ENCODE measurements at regions of chr2 and their contacts with region 1.

Region 1: DNA sequence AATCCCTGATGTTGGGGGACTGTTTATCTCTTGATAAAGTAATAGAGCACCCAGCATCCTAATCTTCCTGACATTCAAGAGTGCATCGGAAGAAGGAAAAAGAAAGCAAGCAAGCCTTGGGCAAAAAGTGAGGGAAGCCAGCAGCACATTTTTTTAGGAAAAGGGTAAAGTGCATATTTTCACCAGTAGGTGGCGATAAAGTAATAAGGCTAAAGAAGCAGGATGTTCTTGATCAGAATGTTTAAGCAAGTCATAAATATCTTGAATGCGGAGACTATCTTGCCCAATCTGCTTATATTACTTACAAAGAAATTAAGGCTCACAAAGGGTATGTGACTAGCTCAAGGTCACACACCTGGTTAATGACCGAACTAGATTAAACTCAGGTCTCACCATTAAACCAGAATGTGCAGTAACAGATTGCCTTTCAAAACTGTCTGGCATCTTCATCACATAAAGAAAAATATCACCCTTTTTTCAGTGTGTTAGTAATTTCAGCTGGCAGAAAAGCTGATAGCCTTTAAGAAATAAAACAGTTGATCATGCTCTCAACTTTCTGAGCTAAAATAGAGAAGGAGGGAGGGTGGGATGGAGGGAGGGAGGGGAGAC is 83.8 kb downstream of the VIT start:
- DNase-seq: no peak

Region 2: DNA sequence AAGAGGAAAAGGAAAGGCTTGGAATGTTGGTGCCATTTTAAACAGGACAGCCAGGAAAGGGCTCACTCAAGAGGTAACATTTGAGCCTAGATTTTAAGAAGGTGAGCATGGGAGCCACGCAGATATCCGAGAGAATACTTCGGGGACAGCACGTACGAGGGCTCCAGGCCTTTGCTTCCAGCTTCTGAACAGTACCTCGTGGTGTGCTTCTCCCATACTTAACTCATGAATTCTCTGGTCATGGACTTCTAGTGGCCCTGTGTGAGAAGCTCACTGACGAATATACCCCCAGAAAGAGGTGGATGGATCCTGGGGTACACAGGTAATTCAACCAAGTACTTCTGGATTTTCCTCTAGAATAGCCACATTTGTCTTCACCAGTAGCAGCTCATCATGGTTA is 86.5 kb before region 1 on chr2:
- intact Hi-C with region 1: no loop called
- DNase-seq: no peak

Region 3: DNA sequence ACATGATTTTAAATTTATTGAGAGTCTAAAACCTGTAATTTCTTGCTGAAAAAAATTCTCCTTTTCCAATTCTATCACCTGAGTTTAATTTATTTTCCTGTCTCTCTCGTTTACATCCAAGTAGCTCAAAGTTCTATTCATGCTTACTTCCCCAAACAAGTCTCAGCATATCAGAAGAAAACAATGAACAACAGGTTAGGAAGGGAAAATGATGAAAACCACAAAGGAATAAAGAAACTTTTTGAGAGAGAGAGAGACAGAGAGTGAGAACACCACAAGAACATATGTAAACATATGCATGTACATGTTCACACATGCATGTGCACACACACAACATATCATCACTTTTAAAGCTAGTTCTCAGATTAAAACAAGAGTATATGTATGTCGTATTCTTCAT is 73.9 kb after region 1 on chr2:
- intact Hi-C with region 1: no loop called
- DNase-seq: no peak

Region 4: DNA sequence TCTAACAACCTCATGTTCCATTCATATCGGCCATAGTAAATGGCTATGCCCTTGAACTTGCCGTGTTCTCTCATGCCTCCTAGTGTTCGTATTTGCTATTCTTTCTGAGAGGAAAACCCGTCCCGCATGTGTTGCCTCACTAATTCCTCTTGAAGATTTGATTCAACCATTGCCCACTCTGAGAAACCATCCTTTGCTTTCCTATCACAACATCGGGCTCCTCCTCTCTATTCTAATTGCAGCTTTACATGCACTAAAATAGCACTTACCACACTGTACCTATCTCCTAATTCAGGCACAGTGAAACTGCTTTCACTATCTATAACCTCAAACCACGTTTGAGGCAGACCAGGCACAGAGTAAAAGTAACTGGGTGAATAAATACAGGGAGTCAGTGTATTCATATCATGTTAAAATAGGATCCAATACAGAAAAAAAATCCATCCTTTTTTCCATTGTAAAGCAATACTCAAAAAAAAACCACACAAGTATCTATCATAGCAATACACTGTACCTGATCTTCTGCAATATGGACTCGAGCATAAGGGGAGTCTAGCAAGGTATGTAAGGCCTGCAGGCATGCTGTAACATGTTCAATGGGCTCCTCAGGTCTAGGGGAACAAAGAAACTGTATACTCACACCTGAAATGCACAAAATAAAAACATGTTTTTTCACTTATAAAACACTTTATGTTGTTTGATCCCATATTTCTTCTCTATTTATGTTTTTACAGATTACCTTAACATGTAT is 225.0 kb after region 1 on chr2:
- intact Hi-C with region 1: loop called (anchors 5 kb)
- DNase-seq: no peak